ENCODE measurements at regions of chr17 and their contacts with region 1.

Region 1: GRCh38 chr17:68613739-68614298 is 12.7 kb upstream of the FAM20A start:
- DNase-seq: peak; percentile 79 to 91
- H3K4me3 ChIP-seq: no peak overlapping the region
- H3K4me1 ChIP-seq: no peaks in the 10 kb centered on the region; the same call in 1 of the 2 replicates
- H3K27me3 ChIP-seq: no peaks in the 10 kb centered on the region

Region 2: DNA sequence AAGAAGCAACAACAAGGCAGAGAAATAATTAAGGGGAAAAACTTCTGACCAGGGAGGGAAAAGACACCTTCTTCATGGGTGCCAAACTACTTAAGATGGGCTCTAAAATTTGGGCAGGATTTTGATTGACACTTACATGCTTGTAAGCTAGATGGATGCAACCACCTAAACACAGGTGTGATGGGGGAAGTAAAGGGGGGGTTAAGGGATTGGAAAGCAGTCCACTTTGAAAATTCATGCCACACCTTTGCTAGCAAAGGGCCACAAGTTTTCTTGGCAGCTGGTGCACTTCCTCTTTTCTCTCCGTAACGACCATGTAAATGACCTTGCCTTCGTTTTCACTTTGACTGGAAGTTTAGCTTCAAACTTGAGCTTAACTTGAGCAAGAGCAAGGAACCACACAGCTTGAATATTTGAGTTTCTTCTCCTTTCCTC is 115.9 kb before region 1 on chr17:
- in situ Hi-C with region 1: no loop called
- DNase-seq: no peak
- H3K4me3 ChIP-seq: no peak overlapping the region
- H3K4me1 ChIP-seq: no peaks in the 10 kb centered on the region
- H3K27me3 ChIP-seq: no peaks in the 10 kb centered on the region

Region 3: GRCh38 chr17:68539548-68540467 is 74.0 kb before region 1 on chr17:
- in situ Hi-C with region 1: loop called (anchors 5 kb)
- DNase-seq: no peak
- H3K4me3 ChIP-seq: no peak overlapping the region
- H3K4me1 ChIP-seq: peaks cover 11% of the 10 kb centered on the region
- H3K27me3 ChIP-seq: no peaks in the 10 kb centered on the region

Measured in HAP-1 (cell line).